PC-9 (cell line): ENCODE measurements at regions of chr14 and their contacts with region 1.

Region 1: DNA sequence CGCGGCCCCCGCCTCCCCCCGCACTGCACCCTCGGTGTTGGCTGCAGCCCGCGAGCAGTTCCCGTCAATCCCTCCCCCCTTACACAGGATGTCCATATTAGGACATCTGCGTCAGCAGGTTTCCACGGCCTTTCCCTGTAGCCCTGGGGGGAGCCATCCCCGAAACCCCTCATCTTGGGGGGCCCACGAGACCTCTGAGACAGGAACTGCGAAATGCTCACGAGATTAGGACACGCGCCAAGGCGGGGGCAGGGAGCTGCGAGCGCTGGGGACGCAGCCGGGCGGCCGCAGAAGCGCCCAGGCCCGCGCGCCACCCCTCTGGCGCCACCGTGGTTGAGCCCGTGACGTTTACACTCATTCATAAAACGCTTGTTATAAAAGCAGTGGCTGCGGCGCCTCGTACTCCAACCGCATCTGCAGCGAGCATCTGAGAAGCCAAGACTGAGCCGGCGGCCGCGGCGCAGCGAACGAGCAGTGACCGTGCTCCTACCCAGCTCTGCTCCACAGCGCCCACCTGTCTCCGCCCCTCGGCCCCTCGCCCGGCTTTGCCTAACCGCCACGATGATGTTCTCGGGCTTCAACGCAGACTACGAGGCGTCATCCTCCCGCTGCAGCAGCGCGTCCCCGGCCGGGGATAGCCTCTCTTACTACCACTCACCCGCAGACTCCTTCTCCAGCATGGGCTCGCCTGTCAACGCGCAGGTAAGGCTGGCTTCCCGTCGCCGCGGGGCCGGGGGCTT is at the start of gene FOS:
- DNase-seq: peak; percentile 92 to 98
- H3K4me3 ChIP-seq: peak within 1 kb of the TSS; percentile 90
- H3K27ac ChIP-seq: peak within 1 kb of the TSS; percentile 95
- H3K4me1 ChIP-seq: peaks cover 51% of the 10 kb centered on the region
- H3K27me3 ChIP-seq: no peaks in the 10 kb centered on the region
- CTCF ChIP-seq: no peak
- total RNA-seq, gene FOS: 84.6 and 154 TPM in 2 replicates

Region 2: GRCh38 chr14:75176142-75176820 is 102.3 kb before region 1 on chr14 and contains the start of gene TMED10:
- CTCF ChIA-PET with region 1: no interaction called
- POLR2A ChIA-PET with region 1: interaction called, 8 read pairs
- intact Hi-C with region 1: loop called (anchors 1 kb)
- DNase-seq: peak; percentile 84 to 96
- H3K4me3 ChIP-seq: peak within 1 kb of the TSS; percentile 80
- H3K27ac ChIP-seq: peak within 1 kb of the TSS; percentile 94
- H3K4me1 ChIP-seq: peaks cover 26% of the 10 kb centered on the region
- H3K27me3 ChIP-seq: no peaks in the 10 kb centered on the region
- CTCF ChIP-seq: no peak
- total RNA-seq, gene TMED10: 709 and 770 TPM in 2 replicates

Region 3: DNA sequence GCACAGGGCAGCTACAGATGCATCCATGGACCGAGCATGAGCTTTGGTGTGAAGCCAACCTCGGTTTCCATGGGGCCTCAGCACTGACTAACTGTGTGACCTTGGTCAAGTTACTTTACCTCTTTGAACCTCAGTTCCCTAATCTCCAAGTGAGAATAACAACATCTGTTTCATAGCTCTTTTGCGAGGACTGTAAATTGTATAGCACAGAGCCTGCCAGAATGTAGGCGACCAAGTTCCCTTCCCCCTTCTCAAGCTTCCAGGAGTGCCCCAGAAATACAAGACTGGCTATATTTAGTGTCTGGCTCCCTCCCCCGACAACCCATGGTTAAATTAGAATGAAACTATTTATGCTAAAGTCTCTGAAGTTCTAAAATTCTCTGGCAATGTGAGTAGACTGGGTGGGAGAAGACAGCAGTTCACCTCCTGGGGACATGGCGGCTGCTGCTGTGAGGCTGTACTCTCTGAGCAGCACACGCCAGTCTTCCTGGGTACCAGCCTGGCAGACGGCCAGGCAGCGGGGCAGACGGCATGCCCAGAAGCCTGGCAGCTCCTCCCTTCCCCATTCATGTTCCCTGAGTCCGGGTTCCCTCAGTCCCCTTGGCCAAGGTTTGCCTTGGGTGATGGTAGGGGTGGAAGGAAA is 80.2 kb before region 1 on chr14:
- CTCF ChIA-PET with region 1: interaction called, 3 read pairs
- POLR2A ChIA-PET with region 1: interaction called, 25 read pairs
- intact Hi-C with region 1: loop called (anchors 1 kb)
- DNase-seq: no peak
- H3K4me3 ChIP-seq: no peak overlapping the region
- H3K27ac ChIP-seq: no peak overlapping the region
- H3K4me1 ChIP-seq: peaks cover 56% of the 10 kb centered on the region
- H3K27me3 ChIP-seq: no peaks in the 10 kb centered on the region
- CTCF ChIP-seq: no peak

Region 4: DNA sequence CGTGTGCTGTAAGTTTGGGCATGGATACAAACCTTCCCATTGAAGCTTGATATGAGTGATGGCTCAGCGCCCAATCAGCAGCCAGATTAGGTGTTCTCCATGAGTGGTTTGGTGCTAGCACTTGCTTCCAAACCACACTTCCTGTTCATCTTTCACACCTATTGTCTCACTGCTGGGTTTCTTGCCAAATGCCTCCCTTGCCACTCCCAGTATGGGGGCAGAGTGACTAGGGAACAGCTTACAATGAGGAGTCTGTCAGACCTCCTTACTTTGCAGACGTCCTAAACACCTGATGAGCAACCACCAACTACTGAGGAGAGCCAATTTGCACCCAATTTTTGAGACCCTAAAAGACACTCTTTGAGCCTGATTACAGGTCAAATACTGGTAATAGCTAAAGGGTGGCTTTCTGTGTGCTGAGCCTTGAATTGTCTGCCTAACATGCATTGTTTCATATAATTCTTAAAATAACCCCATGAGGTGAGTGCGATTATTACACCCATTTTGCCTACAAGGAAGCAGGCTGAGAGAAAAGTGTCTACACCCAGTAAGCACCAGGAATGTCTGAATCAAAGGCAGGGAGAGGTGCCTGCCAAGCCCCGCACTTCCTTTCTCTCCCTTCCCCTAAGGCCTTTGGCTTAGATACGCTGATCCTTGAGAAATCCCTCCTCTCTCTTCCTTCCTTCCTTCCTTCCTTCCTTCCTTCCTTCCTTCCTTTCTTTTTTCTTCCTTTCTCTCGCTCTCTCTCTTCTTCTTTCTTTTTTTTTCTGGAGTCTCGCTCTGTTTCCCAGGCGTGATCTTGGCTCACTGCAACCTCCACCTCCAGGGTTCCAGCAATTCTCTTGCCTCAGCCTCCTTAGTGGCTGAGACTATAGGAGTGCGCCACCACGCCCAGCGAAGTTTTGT is 48.2 kb before region 1 on chr14:
- CTCF ChIA-PET with region 1: no interaction called
- POLR2A ChIA-PET with region 1: interaction called, 7 read pairs
- intact Hi-C with region 1: loop called (anchors 1 kb)
- DNase-seq: peak; percentile 92 to 97
- H3K4me3 ChIP-seq: no peak overlapping the region; the same call in 1 of the 2 replicates
- H3K27ac ChIP-seq: peak overlapping the region; percentile 89
- H3K4me1 ChIP-seq: peaks cover 90% of the 10 kb centered on the region
- H3K27me3 ChIP-seq: no peaks in the 10 kb centered on the region
- CTCF ChIP-seq: peak; percentile 90

Region 5: GRCh38 chr14:75258615-75259466 is 19.8 kb before region 1 on chr14:
- CTCF ChIA-PET with region 1: no interaction called
- POLR2A ChIA-PET with region 1: interaction called, 39 read pairs
- intact Hi-C with region 1: loop called (anchors 1 kb)
- DNase-seq: peak; percentile 100
- H3K4me3 ChIP-seq: peak overlapping the region; percentile 56
- H3K27ac ChIP-seq: peak overlapping the region; percentile 83
- H3K4me1 ChIP-seq: peaks cover 63% of the 10 kb centered on the region
- H3K27me3 ChIP-seq: no peaks in the 10 kb centered on the region
- CTCF ChIP-seq: no peak

Region 6: DNA sequence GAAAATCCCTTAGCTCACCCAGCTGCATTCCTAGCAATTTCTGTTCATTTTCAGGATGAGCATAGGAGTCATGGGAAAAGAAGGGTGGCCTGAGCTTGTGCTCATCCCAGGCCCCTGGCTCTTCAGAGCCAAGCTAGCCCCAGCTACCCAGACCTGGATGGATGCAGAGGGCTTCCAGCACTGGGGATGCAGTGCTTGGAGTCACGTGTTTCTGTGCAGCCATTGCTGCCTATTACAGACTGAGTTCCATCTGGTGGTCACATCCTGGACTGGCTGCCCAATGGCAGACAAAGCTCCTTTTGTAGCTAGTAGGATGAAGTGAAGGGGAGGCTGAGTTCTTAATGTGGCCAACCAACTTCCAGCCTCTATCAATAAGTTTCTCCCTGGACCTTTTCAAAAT is 95.0 kb after region 1 on chr14:
- CTCF ChIA-PET with region 1: no interaction called
- POLR2A ChIA-PET with region 1: no interaction called
- intact Hi-C with region 1: no loop called
- DNase-seq: no peak
- H3K4me3 ChIP-seq: no peak overlapping the region
- H3K27ac ChIP-seq: no peak overlapping the region
- H3K4me1 ChIP-seq: no peaks in the 10 kb centered on the region
- H3K27me3 ChIP-seq: peaks cover 16% of the 10 kb centered on the region; the same call in 1 of the 2 replicates
- CTCF ChIP-seq: no peak